ENCODE measurements at regions of chr9 and their contacts with region 1.

Region 1: GRCh38 chr9:120742951-120743416 is 28.7 kb upstream of the MEGF9 start:
- DNase-seq: no peak
- ATAC-seq: peak; percentile 91
- H3K4me3 Mint-ChIP-seq: no peak overlapping the region
- H3K27ac Mint-ChIP-seq: no peak overlapping the region
- H3K4me1 Mint-ChIP-seq: no peaks in the 10 kb centered on the region
- H3K27me3 Mint-ChIP-seq: no peaks in the 10 kb centered on the region

Region 2: DNA sequence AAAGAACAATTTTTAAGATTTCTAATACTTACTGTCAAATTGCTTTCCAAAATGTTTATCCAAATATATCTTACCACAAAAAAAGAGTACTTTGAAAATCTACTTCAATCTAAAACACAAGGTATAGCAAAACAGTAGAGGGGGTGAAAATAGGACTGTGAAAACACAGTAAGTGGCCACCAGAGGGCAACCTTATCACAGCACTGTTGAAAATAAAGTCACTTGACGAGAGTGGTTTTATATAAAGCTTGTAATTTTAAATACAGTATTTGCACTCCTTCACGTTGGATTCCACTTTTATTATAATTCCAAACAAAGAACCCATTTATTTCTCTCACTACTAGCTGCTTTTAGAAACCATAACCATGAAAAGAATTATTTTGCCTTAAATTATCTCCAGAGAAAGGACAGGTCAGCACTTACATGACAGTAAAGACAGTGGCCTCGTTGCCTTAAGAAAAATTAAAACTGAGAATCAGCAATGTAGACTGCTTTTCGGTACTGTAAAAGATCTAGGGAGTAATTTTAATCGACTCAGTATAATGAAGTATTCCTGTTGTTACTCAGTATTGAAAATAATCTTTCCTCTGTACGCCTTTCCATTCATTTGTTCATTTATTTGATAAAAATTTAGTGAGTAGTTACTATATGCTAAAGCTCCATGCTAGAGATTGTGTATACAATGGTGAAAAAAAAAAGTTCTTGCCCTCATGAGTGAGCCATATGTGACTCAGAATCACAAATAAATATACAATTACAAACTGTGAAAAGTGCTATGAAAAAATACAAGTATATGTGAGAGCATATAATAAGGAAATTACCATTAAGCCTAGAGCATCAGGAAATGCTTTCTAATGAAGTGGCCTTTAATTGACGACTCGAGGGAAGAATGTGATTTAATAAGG is 123.0 kb before region 1 on chr9:
- CTCF ChIA-PET with region 1: interaction called, 3 read pairs
- POLR2A ChIA-PET with region 1: no interaction called
- intact Hi-C with region 1: loop called in 1 of 2 experiments (anchors 5 kb)
- DNase-seq: peak; percentile 74
- ATAC-seq: peak; percentile 84
- H3K4me3 Mint-ChIP-seq: no peak overlapping the region
- H3K27ac Mint-ChIP-seq: no peak overlapping the region
- H3K4me1 Mint-ChIP-seq: peaks cover 5% of the 10 kb centered on the region
- H3K27me3 Mint-ChIP-seq: no peaks in the 10 kb centered on the region